ENCODE measurements at regions of chr12 and their contacts with region 1.

Region 1: GRCh38 chr12:54723379-54724256 is 75.5 kb upstream of the DCD start:
- DNase-seq: peak; percentile 24
- H3K4me3 ChIP-seq: no peak overlapping the region
- H3K27ac ChIP-seq: no peak overlapping the region
- H3K4me1 ChIP-seq: no peaks in the 10 kb centered on the region
- H3K27me3 ChIP-seq: peaks cover 1 to 2% of the 10 kb centered on the region in 2 experiments
- CTCF ChIP-seq: peak; percentile 44 to 62
- POLR2A ChIP-seq: no peak

Region 2: GRCh38 chr12:54734196-54734950 is 10.8 kb after region 1 on chr12:
- CTCF ChIA-PET with region 1: interaction called, 12 read pairs
- POLR2A ChIA-PET with region 1: no interaction called
- dilution Hi-C with region 1: no loop called
- intact Hi-C with region 1: no loop called
- DNase-seq: no peak
- H3K4me3 ChIP-seq: no peak overlapping the region
- H3K27ac ChIP-seq: no peak overlapping the region
- H3K4me1 ChIP-seq: no peaks in the 10 kb centered on the region
- H3K27me3 ChIP-seq: no peaks in the 10 kb centered on the region
- CTCF ChIP-seq: no peak
- POLR2A ChIP-seq: no peak

Region 3: GRCh38 chr12:54773590-54773989 is 50.0 kb after region 1 on chr12:
- CTCF ChIA-PET with region 1: no interaction called
- POLR2A ChIA-PET with region 1: no interaction called
- dilution Hi-C with region 1: no loop called
- intact Hi-C with region 1: no loop called
- DNase-seq: no peak
- H3K4me3 ChIP-seq: no peak overlapping the region
- H3K27ac ChIP-seq: no peak overlapping the region
- H3K4me1 ChIP-seq: no peaks in the 10 kb centered on the region
- H3K27me3 ChIP-seq: no peaks in the 10 kb centered on the region
- CTCF ChIP-seq: no peak
- POLR2A ChIP-seq: no peak

Measured in endothelial cell of umbilical vein (primary cell).